ENCODE measurements at regions of chr20 and their contacts with region 1.

Region 1: DNA sequence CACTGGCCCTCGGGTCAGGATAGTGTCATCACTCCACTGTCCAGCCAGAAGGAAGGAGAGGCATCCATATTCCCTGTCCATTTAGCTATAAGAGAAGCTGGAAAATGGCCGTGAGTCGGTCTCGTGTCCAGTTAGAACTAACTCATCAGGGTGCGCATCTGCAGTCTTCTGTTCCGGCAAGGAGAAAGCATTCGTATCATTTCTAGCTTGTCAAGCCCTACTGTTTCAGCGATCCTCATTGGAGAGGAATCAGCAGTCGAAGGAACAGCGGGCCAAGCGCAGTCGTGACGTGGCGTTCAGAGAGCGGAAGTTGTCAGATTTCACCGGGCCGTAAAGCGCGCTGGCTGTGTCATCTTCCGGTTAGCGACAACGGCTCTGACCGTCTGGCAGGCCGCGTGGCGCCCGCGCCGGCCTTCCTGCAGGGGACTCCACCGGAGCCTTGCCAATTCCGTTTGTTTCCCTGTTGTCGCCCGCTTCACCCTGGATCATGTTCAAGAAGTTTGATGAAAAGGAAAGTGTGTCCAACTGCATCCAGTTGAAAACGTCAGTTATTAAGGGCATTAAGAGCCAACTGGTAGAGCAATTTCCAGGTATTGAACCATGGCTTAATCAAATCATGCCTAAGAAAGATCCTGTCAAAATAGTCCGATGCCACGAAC is 32.9 kb downstream of the HM13 start:
- DNase-seq: peak; percentile 70
- ATAC-seq: peak; percentile 84
- H3K4me3 Mint-ChIP-seq: peak overlapping the region; percentile 88
- H3K27ac Mint-ChIP-seq: peak overlapping the region; percentile 94
- H3K4me1 Mint-ChIP-seq: peaks cover 17% of the 10 kb centered on the region
- H3K27me3 Mint-ChIP-seq: no peaks in the 10 kb centered on the region
- CTCF ChIP-seq: no peak

Region 2: DNA sequence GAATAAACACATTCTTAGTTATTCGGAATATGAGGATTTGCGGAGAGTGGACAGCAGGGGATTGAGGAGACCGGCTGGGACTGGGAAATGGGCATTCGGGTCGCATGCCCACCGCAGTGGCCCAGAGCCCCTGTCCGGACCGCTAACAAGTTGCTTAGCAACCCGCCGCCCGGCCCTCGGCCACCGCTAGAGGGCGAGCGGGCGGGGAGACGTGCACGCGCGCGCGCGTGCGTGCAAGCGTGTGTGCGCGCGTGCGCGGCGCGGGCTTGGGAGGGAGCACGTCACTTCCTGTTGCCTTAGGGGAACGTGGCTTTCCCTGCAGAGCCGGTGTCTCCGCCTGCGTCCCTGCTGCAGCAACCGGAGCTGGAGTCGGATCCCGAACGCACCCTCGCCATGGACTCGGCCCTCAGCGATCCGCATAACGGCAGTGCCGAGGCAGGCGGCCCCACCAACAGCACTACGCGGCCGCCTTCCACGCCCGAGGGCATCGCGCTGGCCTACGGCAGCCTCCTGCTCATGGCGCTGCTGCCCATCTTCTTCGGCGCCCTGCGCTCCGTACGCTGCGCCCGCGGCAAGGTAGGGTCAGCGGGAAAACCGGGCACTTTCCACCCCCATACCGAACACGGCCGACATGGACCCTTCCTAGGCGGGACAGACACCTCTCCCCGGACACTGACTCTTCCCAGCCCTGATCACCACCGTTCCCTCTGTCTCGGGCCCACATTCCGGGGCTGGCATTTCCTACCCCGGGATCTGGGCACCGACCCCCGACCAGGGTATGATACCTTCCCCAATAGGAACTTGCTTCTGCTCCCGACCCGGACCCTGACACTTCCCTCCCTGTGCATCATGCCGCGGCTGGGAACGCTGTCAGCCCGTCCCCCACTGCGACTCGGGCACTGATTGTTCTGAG is 32.7 kb before region 1 on chr20 and contains the start of gene HM13:
- CTCF ChIA-PET with region 1: no interaction called
- POLR2A ChIA-PET with region 1: no interaction called
- intact Hi-C with region 1: loop called (anchors 5 kb)
- DNase-seq: peak; percentile 80
- ATAC-seq: peak; percentile 87
- H3K4me3 Mint-ChIP-seq: no peak within 1 kb of the TSS
- H3K27ac Mint-ChIP-seq: peak within 1 kb of the TSS; percentile 43
- H3K4me1 Mint-ChIP-seq: peaks cover 7% of the 10 kb centered on the region
- H3K27me3 Mint-ChIP-seq: no peaks in the 10 kb centered on the region
- CTCF ChIP-seq: peak; percentile 70
- total RNA-seq, gene HM13: 77.5 and 90.9 TPM in 2 replicates

Region 3: GRCh38 chr20:31595654-31596411 is 48.7 kb after region 1 on chr20:
- CTCF ChIA-PET with region 1: no interaction called
- POLR2A ChIA-PET with region 1: no interaction called
- intact Hi-C with region 1: no loop called
- DNase-seq: no peak
- ATAC-seq: no peak
- H3K4me3 Mint-ChIP-seq: no peak overlapping the region
- H3K27ac Mint-ChIP-seq: no peak overlapping the region
- H3K4me1 Mint-ChIP-seq: no peaks in the 10 kb centered on the region
- H3K27me3 Mint-ChIP-seq: peaks cover 2% of the 10 kb centered on the region
- CTCF ChIP-seq: no peak